Heart left ventricle (tissue), 16 donors: ENCODE measurements at regions of chr14 and their contacts with region 1.

Region 1: GRCh38 chr14:53093206-53093605 is 59.9 kb downstream of the DDHD1 start:
- DNase-seq: no peak
- ATAC-seq: no peak
- H3K4me3 ChIP-seq: no peak overlapping the region
- H3K27ac ChIP-seq: no peak overlapping the region
- H3K4me1 ChIP-seq: no peaks in the 10 kb centered on the region
- H3K27me3 ChIP-seq: no peaks in the 10 kb centered on the region
- CTCF ChIP-seq: no peak
- POLR2A ChIP-seq: no peak

Region 2: DNA sequence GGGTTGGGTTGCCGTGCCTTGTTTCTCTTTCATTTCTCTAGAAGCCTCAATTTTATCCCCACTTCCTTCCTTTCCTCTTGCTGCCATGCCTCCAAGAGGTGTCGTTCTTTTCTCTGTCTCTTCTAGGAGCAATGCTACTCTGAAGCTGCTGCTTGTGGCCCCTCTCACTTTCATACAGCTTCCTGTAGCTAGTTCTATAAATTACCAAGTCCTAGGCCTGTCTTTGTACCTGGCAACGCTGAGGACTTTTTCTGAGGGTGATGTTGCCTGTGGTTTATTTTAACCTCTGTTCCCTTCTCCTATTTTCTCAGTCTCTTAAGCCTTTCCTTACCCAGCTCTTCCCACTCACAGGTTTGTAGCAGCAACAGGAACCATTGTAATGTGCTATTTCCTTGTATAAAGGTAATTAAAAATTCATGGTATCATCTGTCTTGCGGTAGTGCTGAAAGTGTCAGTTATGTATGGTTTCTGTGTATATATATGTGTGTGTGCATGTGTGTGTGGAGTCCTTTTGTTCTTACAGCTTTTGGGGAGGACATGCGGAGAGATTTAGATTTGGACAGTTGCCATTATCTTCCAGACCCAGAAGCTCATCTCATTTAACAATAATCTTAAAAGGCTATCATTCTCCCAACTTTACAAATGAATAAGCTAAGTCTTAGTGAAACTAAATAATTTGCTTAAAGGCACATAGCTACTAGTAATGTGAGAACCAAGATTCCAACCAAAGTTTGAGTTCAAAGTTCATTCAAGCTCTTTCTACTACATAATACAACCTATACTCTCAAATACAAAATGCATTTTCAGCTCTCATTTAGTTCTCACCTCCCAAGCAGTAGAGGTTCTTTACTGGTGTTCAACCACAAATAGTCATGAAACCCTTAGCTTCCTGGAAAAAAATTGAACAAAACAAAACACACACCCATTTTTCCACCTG is 16.2 kb after region 1 on chr14:
- intact Hi-C with region 1: loop called in 1 of 10 experiments (anchors 2 kb)
- DNase-seq: no peak
- ATAC-seq: peak in 1 of 4 donors; percentile 39
- H3K4me3 ChIP-seq: peak overlapping the region in 7 of 12 donors; percentile 7 to 43 (median 18)
- H3K27ac ChIP-seq: peak overlapping the region in 1 of 12 donors; percentile 79
- H3K4me1 ChIP-seq: peaks cover 0 to 15% (median 0%) of the 10 kb centered on the region in 12 donors
- H3K27me3 ChIP-seq: no peaks in the 10 kb centered on the region
- CTCF ChIP-seq: no peak
- POLR2A ChIP-seq: no peak